CD8-positive, alpha-beta T cell (primary cell): ENCODE measurements at regions of chr9 and their contacts with region 1.

Region 1: GRCh38 chr9:5628530-5629311 is at the start of gene RIC1:
- DNase-seq: peak; percentile 74 to 96 (median 87)
- ATAC-seq: peak; percentile 81
- H3K4me3 ChIP-seq: peak within 1 kb of the TSS; percentile 73 to 95
- H3K4me3 Mint-ChIP-seq: peak within 1 kb of the TSS; percentile 98
- H3K27ac ChIP-seq: peak within 1 kb of the TSS; percentile 84 to 88
- H3K27ac Mint-ChIP-seq: peak within 1 kb of the TSS; percentile 99
- H3K4me1 ChIP-seq: peaks cover 53% of the 10 kb centered on the region
- H3K4me1 Mint-ChIP-seq: peaks cover 63% of the 10 kb centered on the region
- H3K27me3 ChIP-seq: no peaks in the 10 kb centered on the region
- H3K27me3 Mint-ChIP-seq: no peaks in the 10 kb centered on the region
- CTCF ChIP-seq: no peak
- total RNA-seq, gene RIC1: 17.0 to 17.4 TPM

Region 2: GRCh38 chr9:4792572-4793458 is 835.9 kb before region 1 on chr9 and contains the start of gene RCL1:
- CTCF ChIA-PET with region 1: no interaction called
- POLR2A ChIA-PET with region 1: no interaction called
- intact Hi-C with region 1: loop called (anchors 1 to 5 kb)
- DNase-seq: peak; percentile 92 to 98 (median 95)
- ATAC-seq: peak; percentile 90
- H3K4me3 ChIP-seq: peak within 1 kb of the TSS; percentile 92 to 98
- H3K4me3 Mint-ChIP-seq: peak within 1 kb of the TSS; percentile 95
- H3K27ac ChIP-seq: peak within 1 kb of the TSS; percentile 90 to 92
- H3K27ac Mint-ChIP-seq: peak within 1 kb of the TSS; percentile 96
- H3K4me1 ChIP-seq: peaks cover 30% of the 10 kb centered on the region
- H3K4me1 Mint-ChIP-seq: peaks cover 47% of the 10 kb centered on the region
- H3K27me3 ChIP-seq: no peaks in the 10 kb centered on the region
- H3K27me3 Mint-ChIP-seq: no peaks in the 10 kb centered on the region
- CTCF ChIP-seq: no peak
- total RNA-seq, gene RCL1: 30.8 to 35.0 TPM

Region 3: GRCh38 chr9:5593904-5594303 is 34.8 kb before region 1 on chr9:
- CTCF ChIA-PET with region 1: interaction called, 4 read pairs
- POLR2A ChIA-PET with region 1: interaction called, 5 read pairs
- intact Hi-C with region 1: loop called in 1 of 2 experiments (anchors 5 kb)
- DNase-seq: peak in 1 of 9 experiments; percentile 17
- ATAC-seq: no peak
- H3K4me3 ChIP-seq: no peak overlapping the region
- H3K4me3 Mint-ChIP-seq: no peak overlapping the region
- H3K27ac ChIP-seq: no peak overlapping the region
- H3K27ac Mint-ChIP-seq: no peak overlapping the region
- H3K4me1 ChIP-seq: no peaks in the 10 kb centered on the region
- H3K4me1 Mint-ChIP-seq: peaks cover 6% of the 10 kb centered on the region
- H3K27me3 ChIP-seq: no peaks in the 10 kb centered on the region
- H3K27me3 Mint-ChIP-seq: no peaks in the 10 kb centered on the region
- CTCF ChIP-seq: no peak

Region 4: GRCh38 chr9:5708414-5708813 is 79.7 kb after region 1 on chr9:
- CTCF ChIA-PET with region 1: no interaction called
- POLR2A ChIA-PET with region 1: no interaction called
- intact Hi-C with region 1: loop called in 1 of 2 experiments (anchors 5 kb)
- DNase-seq: no peak
- ATAC-seq: no peak
- H3K4me3 ChIP-seq: no peak overlapping the region
- H3K4me3 Mint-ChIP-seq: no peak overlapping the region
- H3K27ac ChIP-seq: no peak overlapping the region
- H3K27ac Mint-ChIP-seq: no peak overlapping the region
- H3K4me1 ChIP-seq: no peaks in the 10 kb centered on the region
- H3K4me1 Mint-ChIP-seq: no peaks in the 10 kb centered on the region
- H3K27me3 ChIP-seq: no peaks in the 10 kb centered on the region
- H3K27me3 Mint-ChIP-seq: no peaks in the 10 kb centered on the region
- CTCF ChIP-seq: no peak

Region 5: GRCh38 chr9:6008169-6008979 is 379.7 kb after region 1 on chr9:
- CTCF ChIA-PET with region 1: no interaction called
- POLR2A ChIA-PET with region 1: interaction called, 6 read pairs
- intact Hi-C with region 1: loop called (anchors 1 to 5 kb)
- DNase-seq: peak; percentile 89 to 99 (median 93)
- ATAC-seq: peak; percentile 72
- H3K4me3 ChIP-seq: peak overlapping the region; percentile 75 to 77
- H3K4me3 Mint-ChIP-seq: peak overlapping the region; percentile 85
- H3K27ac ChIP-seq: peak overlapping the region; percentile 82 to 94
- H3K27ac Mint-ChIP-seq: peak overlapping the region; percentile 89
- H3K4me1 ChIP-seq: peaks cover 32% of the 10 kb centered on the region
- H3K4me1 Mint-ChIP-seq: peaks cover 54% of the 10 kb centered on the region
- H3K27me3 ChIP-seq: no peaks in the 10 kb centered on the region
- H3K27me3 Mint-ChIP-seq: no peaks in the 10 kb centered on the region
- CTCF ChIP-seq: no peak

Region 6: GRCh38 chr9:6681147-6681956 is 1052.6 kb after region 1 on chr9:
- CTCF ChIA-PET with region 1: no interaction called
- POLR2A ChIA-PET with region 1: no interaction called
- intact Hi-C with region 1: loop called (anchors 2 to 5 kb)
- DNase-seq: peak; percentile 77 to 96 (median 89)
- ATAC-seq: peak; percentile 85
- H3K4me3 ChIP-seq: peak overlapping the region; percentile 84 to 97
- H3K4me3 Mint-ChIP-seq: peak overlapping the region; percentile 93
- H3K27ac ChIP-seq: peak overlapping the region; percentile 94 to 96
- H3K27ac Mint-ChIP-seq: peak overlapping the region; percentile 98
- H3K4me1 ChIP-seq: peaks cover 11% of the 10 kb centered on the region
- H3K4me1 Mint-ChIP-seq: peaks cover 22% of the 10 kb centered on the region
- H3K27me3 ChIP-seq: no peaks in the 10 kb centered on the region
- H3K27me3 Mint-ChIP-seq: no peaks in the 10 kb centered on the region
- CTCF ChIP-seq: no peak